CD4-positive, alpha-beta memory T cell (primary cell): ENCODE measurements at regions of chr14 and their contacts with region 1.

Region 1: GRCh38 chr14:101731187-101732080 is 30.1 kb upstream of the PPP2R5C start:
- DNase-seq: peak; percentile 83 to 96 (median 83)
- H3K4me3 ChIP-seq: peak overlapping the region; percentile 31 to 58
- H3K4me3 Mint-ChIP-seq: peak overlapping the region; percentile 68 to 86 (median 82)
- H3K27ac ChIP-seq: peak overlapping the region; percentile 75
- H3K27ac Mint-ChIP-seq: peak overlapping the region; percentile 85 to 100 (median 99)
- H3K4me1 ChIP-seq: peaks cover 35% of the 10 kb centered on the region
- H3K4me1 Mint-ChIP-seq: peaks cover 29 to 52% (median 42%) of the 10 kb centered on the region in 4 donors
- H3K27me3 ChIP-seq: no peaks in the 10 kb centered on the region
- H3K27me3 Mint-ChIP-seq: no peaks in the 10 kb centered on the region

Region 2: GRCh38 chr14:101643651-101644050 is 87.8 kb before region 1 on chr14:
- CTCF ChIA-PET with region 1: no interaction called
- POLR2A ChIA-PET with region 1: no interaction called
- intact Hi-C with region 1: no loop called
- DNase-seq: no peak
- H3K4me3 ChIP-seq: no peak overlapping the region
- H3K4me3 Mint-ChIP-seq: no peak overlapping the region
- H3K27ac ChIP-seq: no peak overlapping the region
- H3K27ac Mint-ChIP-seq: no peak overlapping the region
- H3K4me1 ChIP-seq: no peaks in the 10 kb centered on the region
- H3K4me1 Mint-ChIP-seq: no peaks in the 10 kb centered on the region
- H3K27me3 ChIP-seq: no peaks in the 10 kb centered on the region
- H3K27me3 Mint-ChIP-seq: peaks cover 13 to 23% of the 10 kb centered on the region in 2 donors

Region 3: GRCh38 chr14:101817501-101818001 is 86.1 kb after region 1 on chr14:
- CTCF ChIA-PET with region 1: no interaction called
- POLR2A ChIA-PET with region 1: interaction called, 17 read pairs
- intact Hi-C with region 1: no loop called
- DNase-seq: peak; percentile 62 to 80 (median 74)
- H3K4me3 ChIP-seq: peak overlapping the region; percentile 5 to 41
- H3K4me3 Mint-ChIP-seq: peak overlapping the region; percentile 77 to 94 (median 86)
- H3K27ac ChIP-seq: peak overlapping the region; percentile 98
- H3K27ac Mint-ChIP-seq: peak overlapping the region; percentile 97 to 100 (median 100)
- H3K4me1 ChIP-seq: peaks cover 96% of the 10 kb centered on the region
- H3K4me1 Mint-ChIP-seq: peaks cover 74 to 94% (median 83%) of the 10 kb centered on the region in 4 donors
- H3K27me3 ChIP-seq: no peaks in the 10 kb centered on the region
- H3K27me3 Mint-ChIP-seq: no peaks in the 10 kb centered on the region